ENCODE measurements at regions of chr9 and their contacts with region 1.

Region 1: GRCh38 chr9:68584189-68585033 is 43.7 kb upstream of the TMEM252 start:
- DNase-seq: peak; percentile 75
- H3K4me3 ChIP-seq: no peak overlapping the region
- H3K27ac ChIP-seq: no peak overlapping the region
- H3K4me1 ChIP-seq: no peaks in the 10 kb centered on the region
- H3K27me3 ChIP-seq: no peaks in the 10 kb centered on the region
- CTCF ChIP-seq: peak; percentile 99

Region 2: GRCh38 chr9:68999393-69000105 is 415.1 kb after region 1 on chr9:
- intact Hi-C with region 1: loop called (anchors 10 kb)
- DNase-seq: peak; percentile 30
- H3K4me3 ChIP-seq: no peak overlapping the region
- H3K27ac ChIP-seq: peak overlapping the region; percentile 73
- H3K4me1 ChIP-seq: peaks cover 43% of the 10 kb centered on the region
- H3K27me3 ChIP-seq: no peaks in the 10 kb centered on the region
- CTCF ChIP-seq: peak; percentile 84

Measured in left ventricle myocardium inferior (tissue), 1 donor.